ENCODE measurements at regions of chr9 and their contacts with region 1.

Region 1: DNA sequence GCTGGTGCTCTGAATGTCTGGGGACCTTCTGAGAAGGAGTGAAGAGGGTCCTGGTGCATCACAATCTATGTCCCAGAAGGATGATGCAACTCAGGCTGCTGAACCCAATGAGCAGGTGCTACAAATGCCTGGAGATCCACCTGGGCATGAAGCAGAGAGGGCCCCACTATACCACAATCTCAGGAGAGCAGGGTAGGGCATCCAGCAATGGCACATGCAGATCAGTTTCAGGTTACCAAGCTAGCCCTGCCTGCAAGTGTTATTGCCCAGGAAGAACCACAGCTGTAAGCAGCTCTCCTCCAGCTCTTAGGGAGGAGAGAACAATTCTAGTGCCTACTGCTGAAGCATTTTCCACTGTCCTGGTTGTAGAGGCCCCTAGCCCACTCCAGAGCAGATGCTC is 389.2 kb upstream of the TNC start:
- DNase-seq: no peak
- ATAC-seq: no peak
- H3K4me3 ChIP-seq: no peak overlapping the region
- H3K4me3 Mint-ChIP-seq: no peak overlapping the region
- H3K27ac ChIP-seq: no peak overlapping the region
- H3K27ac Mint-ChIP-seq: no peak overlapping the region
- H3K4me1 ChIP-seq: no peaks in the 10 kb centered on the region
- H3K4me1 Mint-ChIP-seq: no peaks in the 10 kb centered on the region
- H3K27me3 ChIP-seq: no peaks in the 10 kb centered on the region
- H3K27me3 Mint-ChIP-seq: peaks cover 1 to 14% of the 10 kb centered on the region in 2 donors

Region 2: GRCh38 chr9:115531410-115532125 is 24.4 kb after region 1 on chr9:
- CTCF ChIA-PET with region 1: interaction called in 1 of 2 experiments, 10 read pairs
- POLR2A ChIA-PET with region 1: no interaction called
- DNase-seq: no peak
- ATAC-seq: no peak
- H3K4me3 ChIP-seq: no peak overlapping the region
- H3K4me3 Mint-ChIP-seq: no peak overlapping the region
- H3K27ac ChIP-seq: no peak overlapping the region
- H3K27ac Mint-ChIP-seq: no peak overlapping the region
- H3K4me1 ChIP-seq: no peaks in the 10 kb centered on the region
- H3K4me1 Mint-ChIP-seq: no peaks in the 10 kb centered on the region
- H3K27me3 ChIP-seq: no peaks in the 10 kb centered on the region
- H3K27me3 Mint-ChIP-seq: peaks cover 21 to 24% of the 10 kb centered on the region in 2 donors